ENCODE measurements at regions of chr11 and their contacts with region 1.

Region 1: DNA sequence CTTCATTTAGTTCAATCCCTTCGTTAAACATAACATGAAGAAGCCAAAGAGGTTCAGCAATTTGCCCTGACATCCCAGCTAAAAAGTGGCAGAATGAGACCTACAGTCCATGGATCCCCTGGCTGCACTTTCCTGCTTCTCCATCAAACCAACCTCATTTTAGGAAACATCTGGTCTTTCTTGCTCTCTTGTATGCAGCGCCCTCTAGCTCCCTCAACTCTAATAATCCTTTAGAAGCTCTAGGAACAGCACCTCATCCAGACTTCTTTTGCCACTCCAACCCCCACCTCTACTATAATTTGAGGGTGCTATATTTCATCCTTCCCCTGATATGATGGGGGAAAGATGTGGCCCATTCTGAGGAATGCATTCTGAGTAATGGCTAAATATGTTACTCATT is 7.4 kb downstream of the CNTF start:
- DNase-seq: peak; percentile 24
- H3K4me3 Mint-ChIP-seq: no peak overlapping the region
- H3K27ac Mint-ChIP-seq: no peak overlapping the region
- H3K4me1 Mint-ChIP-seq: peaks cover 7% of the 10 kb centered on the region
- H3K27me3 Mint-ChIP-seq: no peaks in the 10 kb centered on the region

Region 2: DNA sequence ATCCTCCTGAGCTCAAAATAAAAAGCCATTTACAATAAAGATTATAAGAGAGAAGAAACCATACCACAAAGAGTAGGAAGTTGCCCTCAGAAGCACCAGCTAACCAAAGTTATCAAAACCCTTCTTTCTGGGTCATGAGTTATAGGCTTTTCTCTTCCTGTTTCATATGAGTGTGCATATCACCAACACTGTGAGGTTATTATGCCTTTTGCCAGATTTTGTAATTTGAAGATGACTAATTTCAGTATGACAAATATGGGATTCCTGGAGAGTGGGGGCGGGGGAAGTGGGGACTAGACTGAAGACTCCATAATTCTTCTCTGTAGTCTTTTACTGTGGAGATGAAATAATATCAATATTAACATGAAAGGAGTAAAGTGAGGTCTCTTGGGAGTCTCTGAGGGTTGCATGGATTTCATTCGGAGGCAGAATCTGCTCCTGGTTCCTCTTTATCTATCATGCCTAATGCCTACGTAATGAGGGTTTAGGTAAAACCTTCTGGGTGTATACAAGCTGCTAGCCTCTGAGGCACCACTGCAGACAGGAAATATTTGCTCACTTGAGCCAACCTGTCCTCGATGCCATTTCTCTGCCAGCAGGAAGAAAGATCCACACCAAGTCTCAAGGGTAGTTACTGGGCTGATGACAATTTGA is 56.3 kb before region 1 on chr11:
- CTCF ChIA-PET with region 1: interaction called, 81 read pairs
- POLR2A ChIA-PET with region 1: interaction called, 4 read pairs
- intact Hi-C with region 1: loop called (anchors 1 kb)
- DNase-seq: peak; percentile 82
- H3K4me3 Mint-ChIP-seq: peak overlapping the region; percentile 87
- H3K27ac Mint-ChIP-seq: peak overlapping the region; percentile 100
- H3K4me1 Mint-ChIP-seq: peaks cover 46% of the 10 kb centered on the region
- H3K27me3 Mint-ChIP-seq: no peaks in the 10 kb centered on the region

Region 3: DNA sequence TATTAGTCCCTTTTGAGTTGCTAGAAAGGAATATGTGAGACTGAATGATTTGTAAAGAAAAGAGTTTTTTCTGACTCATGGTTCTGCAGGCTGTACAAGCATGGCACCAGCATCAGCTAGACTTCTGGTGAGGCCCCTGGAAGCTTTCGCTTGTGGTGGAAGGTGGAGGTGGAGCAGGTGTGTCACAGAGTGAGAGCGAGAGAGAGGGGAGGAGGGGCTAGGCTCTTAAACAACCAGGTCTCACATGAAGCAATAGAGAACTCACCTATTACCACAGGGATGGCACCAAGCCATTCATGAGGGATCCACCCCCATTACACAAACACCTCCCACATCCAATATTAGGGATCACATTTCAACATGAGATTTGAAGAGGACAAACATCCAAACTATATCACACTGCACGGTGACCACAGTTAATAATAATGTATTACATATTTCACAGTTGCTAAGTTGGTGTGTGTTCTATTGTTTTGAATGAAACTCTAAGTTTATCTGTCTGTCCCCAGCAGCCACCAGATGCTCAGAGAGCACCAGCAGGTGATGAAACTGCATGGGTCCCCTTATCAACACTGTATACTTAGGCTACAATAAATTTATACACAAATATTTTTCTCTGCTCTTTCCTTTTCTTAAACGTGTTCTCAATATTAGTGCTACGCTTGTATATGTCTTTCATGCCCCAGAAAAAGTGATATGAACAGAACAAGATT is 36.9 kb before region 1 on chr11:
- CTCF ChIA-PET with region 1: interaction called, 22 read pairs
- POLR2A ChIA-PET with region 1: no interaction called
- intact Hi-C with region 1: no loop called
- DNase-seq: peak; percentile 76
- H3K4me3 Mint-ChIP-seq: no peak overlapping the region
- H3K27ac Mint-ChIP-seq: peak overlapping the region; percentile 45
- H3K4me1 Mint-ChIP-seq: peaks cover 73% of the 10 kb centered on the region
- H3K27me3 Mint-ChIP-seq: no peaks in the 10 kb centered on the region

Region 4: DNA sequence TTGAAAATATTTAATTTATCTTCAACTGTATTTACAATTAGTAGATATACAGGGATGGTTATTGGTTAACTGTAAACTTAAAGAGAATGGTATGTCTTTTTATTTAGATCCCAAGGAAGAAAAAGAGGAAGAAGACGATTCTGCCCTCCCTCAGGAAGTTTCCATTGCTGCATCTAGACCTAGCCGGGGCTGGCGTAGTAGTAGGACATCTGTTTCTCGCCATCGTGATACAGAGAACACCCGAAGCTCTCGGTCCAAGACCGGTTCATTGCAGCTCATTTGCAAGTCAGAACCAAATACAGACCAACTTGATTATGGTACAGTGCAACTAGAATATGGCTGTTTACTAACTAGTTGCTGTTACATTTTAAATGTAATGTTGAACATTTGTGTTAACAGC is 20.1 kb before region 1 on chr11:
- CTCF ChIA-PET with region 1: interaction called, 11 read pairs
- POLR2A ChIA-PET with region 1: no interaction called
- intact Hi-C with region 1: no loop called
- DNase-seq: no peak
- H3K4me3 Mint-ChIP-seq: no peak overlapping the region
- H3K27ac Mint-ChIP-seq: no peak overlapping the region
- H3K4me1 Mint-ChIP-seq: peaks cover 58% of the 10 kb centered on the region
- H3K27me3 Mint-ChIP-seq: no peaks in the 10 kb centered on the region